GM13977 (cell line): ENCODE measurements at regions of chr5 and their contacts with region 1.

Region 1: DNA sequence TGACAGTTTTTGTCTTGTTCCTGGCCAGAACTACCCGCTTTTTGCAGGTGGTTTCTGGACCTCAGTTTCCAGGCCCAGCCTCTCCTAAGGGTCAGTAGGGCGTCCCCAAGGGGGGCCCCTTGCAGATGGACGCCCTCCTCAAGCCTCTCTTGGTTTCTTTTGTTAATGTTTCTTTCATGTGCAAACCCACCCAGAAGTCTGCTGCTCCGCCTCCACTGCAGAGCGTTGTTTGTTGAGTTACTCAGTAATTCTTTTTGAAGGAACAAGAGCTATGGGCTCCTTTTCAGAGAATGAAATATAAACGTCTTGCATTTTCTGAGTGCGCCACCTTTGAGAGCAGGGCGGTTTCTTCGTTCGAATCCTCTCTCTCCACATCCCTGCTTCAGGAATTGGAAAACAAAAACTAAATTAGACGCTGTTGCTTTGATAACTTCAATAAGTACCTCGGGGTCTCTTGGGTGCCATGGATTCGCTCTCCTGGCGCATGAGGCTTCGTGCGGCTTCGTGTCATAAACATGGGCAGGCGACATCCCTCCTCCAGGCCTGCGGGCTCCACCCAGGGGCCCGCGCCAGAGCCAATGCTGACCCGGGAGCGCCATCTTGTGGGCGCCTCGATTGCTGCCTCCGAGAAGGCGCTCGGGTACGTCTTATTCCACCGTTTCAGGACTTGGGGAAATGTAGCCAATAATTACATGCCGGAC is 38.3 kb upstream of the CKMT2 start:
- DNase-seq: peak; percentile 92
- CTCF ChIP-seq: peak; percentile 95

Region 2: DNA sequence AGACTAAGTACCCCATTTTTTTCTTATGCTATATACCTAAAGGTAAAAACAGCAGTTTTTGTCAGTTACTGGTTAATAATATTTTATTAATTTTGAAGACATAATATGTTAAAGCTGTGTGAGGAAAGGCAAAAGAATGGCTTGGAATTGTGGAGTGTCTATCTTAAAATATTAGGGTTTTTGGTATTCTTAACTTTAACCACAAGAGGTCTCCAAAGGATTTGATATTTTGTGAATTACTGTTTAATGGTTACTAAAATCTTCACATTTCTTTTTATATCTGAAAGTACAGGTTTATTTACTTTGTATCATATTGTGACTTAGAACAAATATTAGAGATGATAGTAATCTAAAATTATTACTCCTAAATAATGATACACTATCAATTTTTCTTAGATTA is 508.0 kb before region 1 on chr5:
- in situ Hi-C with region 1: loop called (anchors 25 kb)
- DNase-seq: no peak
- CTCF ChIP-seq: peak; percentile 24